CD4-positive, alpha-beta memory T cell (primary cell): ENCODE measurements at regions of chr2 and their contacts with region 1.

Region 1: GRCh38 chr2:231713730-231714430 is 5.6 kb downstream of the PTMA start:
- DNase-seq: peak; percentile 87 to 91 (median 89)
- H3K4me3 ChIP-seq: no peak overlapping the region
- H3K4me3 Mint-ChIP-seq: peak overlapping the region; percentile 32 to 88 (median 66)
- H3K27ac ChIP-seq: peak overlapping the region; percentile 36
- H3K27ac Mint-ChIP-seq: peak overlapping the region; percentile 94 to 100 (median 98)
- H3K4me1 ChIP-seq: peaks cover 40% of the 10 kb centered on the region
- H3K4me1 Mint-ChIP-seq: peaks cover 24 to 47% (median 34%) of the 10 kb centered on the region in 4 donors
- H3K27me3 ChIP-seq: no peaks in the 10 kb centered on the region
- H3K27me3 Mint-ChIP-seq: no peaks in the 10 kb centered on the region

Region 2: GRCh38 chr2:231260442-231261208 is 453.3 kb before region 1 on chr2:
- CTCF ChIA-PET with region 1: no interaction called
- POLR2A ChIA-PET with region 1: no interaction called
- intact Hi-C with region 1: no loop called
- DNase-seq: no peak
- H3K4me3 ChIP-seq: no peak overlapping the region
- H3K4me3 Mint-ChIP-seq: peak overlapping the region in 1 of 8 donors; percentile 31
- H3K27ac ChIP-seq: no peak overlapping the region
- H3K27ac Mint-ChIP-seq: no peak overlapping the region
- H3K4me1 ChIP-seq: peaks cover 12% of the 10 kb centered on the region
- H3K4me1 Mint-ChIP-seq: peaks cover 11 to 19% (median 13%) of the 10 kb centered on the region in 4 donors
- H3K27me3 ChIP-seq: no peaks in the 10 kb centered on the region
- H3K27me3 Mint-ChIP-seq: peaks cover 2 to 4% of the 10 kb centered on the region in 2 donors

Region 3: GRCh38 chr2:231612179-231613053 is 101.5 kb before region 1 on chr2:
- CTCF ChIA-PET with region 1: interaction called, 155 read pairs
- POLR2A ChIA-PET with region 1: interaction called, 116 read pairs
- intact Hi-C with region 1: loop called (anchors 1 kb)
- DNase-seq: peak; percentile 81 to 88 (median 83)
- H3K4me3 ChIP-seq: peak overlapping the region in 1 of 2 donors; percentile 62
- H3K4me3 Mint-ChIP-seq: peak overlapping the region; percentile 71 to 96 (median 87)
- H3K27ac ChIP-seq: peak overlapping the region; percentile 65
- H3K27ac Mint-ChIP-seq: peak overlapping the region; percentile 88 to 96 (median 93)
- H3K4me1 ChIP-seq: peaks cover 23% of the 10 kb centered on the region
- H3K4me1 Mint-ChIP-seq: peaks cover 18 to 41% (median 28%) of the 10 kb centered on the region in 4 donors
- H3K27me3 ChIP-seq: no peaks in the 10 kb centered on the region
- H3K27me3 Mint-ChIP-seq: no peaks in the 10 kb centered on the region

Region 4: GRCh38 chr2:231662028-231662810 is 51.7 kb before region 1 on chr2:
- CTCF ChIA-PET with region 1: interaction called, 65 read pairs
- POLR2A ChIA-PET with region 1: interaction called, 265 read pairs
- intact Hi-C with region 1: no loop called
- DNase-seq: peak; percentile 93 to 99 (median 99)
- H3K4me3 ChIP-seq: peak overlapping the region; percentile 43 to 60
- H3K4me3 Mint-ChIP-seq: peak overlapping the region; percentile 75 to 86 (median 80)
- H3K27ac ChIP-seq: peak overlapping the region; percentile 86
- H3K27ac Mint-ChIP-seq: peak overlapping the region; percentile 90 to 99 (median 97)
- H3K4me1 ChIP-seq: peaks cover 14% of the 10 kb centered on the region
- H3K4me1 Mint-ChIP-seq: peaks cover 5 to 23% (median 13%) of the 10 kb centered on the region in 4 donors
- H3K27me3 ChIP-seq: no peaks in the 10 kb centered on the region
- H3K27me3 Mint-ChIP-seq: no peaks in the 10 kb centered on the region

Region 5: GRCh38 chr2:231687133-231687852 is 26.6 kb before region 1 on chr2:
- CTCF ChIA-PET with region 1: interaction called, 742 read pairs
- POLR2A ChIA-PET with region 1: interaction called, 50 read pairs
- intact Hi-C with region 1: loop called (anchors 1 kb)
- DNase-seq: peak in 4 of 5 donors; percentile 50 to 62 (median 55)
- H3K4me3 ChIP-seq: no peak overlapping the region
- H3K4me3 Mint-ChIP-seq: peak overlapping the region in 1 of 8 donors; percentile 29
- H3K27ac ChIP-seq: no peak overlapping the region
- H3K27ac Mint-ChIP-seq: peak overlapping the region in 5 of 7 donors; percentile 0 to 57 (median 36)
- H3K4me1 ChIP-seq: no peaks in the 10 kb centered on the region
- H3K4me1 Mint-ChIP-seq: peaks cover 0 to 6% (median 3%) of the 10 kb centered on the region in 4 donors
- H3K27me3 ChIP-seq: peaks cover 3% of the 10 kb centered on the region
- H3K27me3 Mint-ChIP-seq: peaks cover 3 to 5% of the 10 kb centered on the region in 2 donors

Region 6: DNA sequence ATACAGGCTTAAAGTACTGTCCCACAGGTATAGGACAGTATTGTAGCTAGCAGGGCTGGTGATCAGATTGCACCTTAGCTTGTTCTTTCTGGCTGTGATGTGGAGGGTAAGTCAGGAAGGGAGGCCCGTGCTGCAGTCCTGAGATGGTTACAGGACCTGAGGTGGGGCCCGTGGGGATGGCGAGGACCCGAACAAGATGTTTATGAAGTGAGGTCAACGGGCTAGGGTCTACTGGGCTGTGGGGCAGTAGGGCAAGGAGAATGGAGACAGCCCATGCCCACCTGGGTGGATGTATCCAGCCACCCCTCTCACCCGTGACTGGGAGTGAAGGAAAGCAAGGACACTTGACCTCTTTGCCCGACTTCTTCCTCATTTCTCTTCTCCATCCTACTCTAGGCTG is 12.3 kb after region 1 on chr2:
- CTCF ChIA-PET with region 1: interaction called, 23 read pairs
- POLR2A ChIA-PET with region 1: interaction called, 8 read pairs
- intact Hi-C with region 1: no loop called
- DNase-seq: no peak
- H3K4me3 ChIP-seq: no peak overlapping the region
- H3K4me3 Mint-ChIP-seq: no peak overlapping the region
- H3K27ac ChIP-seq: no peak overlapping the region
- H3K27ac Mint-ChIP-seq: no peak overlapping the region
- H3K4me1 ChIP-seq: no peaks in the 10 kb centered on the region
- H3K4me1 Mint-ChIP-seq: no peaks in the 10 kb centered on the region
- H3K27me3 ChIP-seq: no peaks in the 10 kb centered on the region
- H3K27me3 Mint-ChIP-seq: no peaks in the 10 kb centered on the region